ENCODE measurements at regions of chr2 and their contacts with region 1.

Region 1: DNA sequence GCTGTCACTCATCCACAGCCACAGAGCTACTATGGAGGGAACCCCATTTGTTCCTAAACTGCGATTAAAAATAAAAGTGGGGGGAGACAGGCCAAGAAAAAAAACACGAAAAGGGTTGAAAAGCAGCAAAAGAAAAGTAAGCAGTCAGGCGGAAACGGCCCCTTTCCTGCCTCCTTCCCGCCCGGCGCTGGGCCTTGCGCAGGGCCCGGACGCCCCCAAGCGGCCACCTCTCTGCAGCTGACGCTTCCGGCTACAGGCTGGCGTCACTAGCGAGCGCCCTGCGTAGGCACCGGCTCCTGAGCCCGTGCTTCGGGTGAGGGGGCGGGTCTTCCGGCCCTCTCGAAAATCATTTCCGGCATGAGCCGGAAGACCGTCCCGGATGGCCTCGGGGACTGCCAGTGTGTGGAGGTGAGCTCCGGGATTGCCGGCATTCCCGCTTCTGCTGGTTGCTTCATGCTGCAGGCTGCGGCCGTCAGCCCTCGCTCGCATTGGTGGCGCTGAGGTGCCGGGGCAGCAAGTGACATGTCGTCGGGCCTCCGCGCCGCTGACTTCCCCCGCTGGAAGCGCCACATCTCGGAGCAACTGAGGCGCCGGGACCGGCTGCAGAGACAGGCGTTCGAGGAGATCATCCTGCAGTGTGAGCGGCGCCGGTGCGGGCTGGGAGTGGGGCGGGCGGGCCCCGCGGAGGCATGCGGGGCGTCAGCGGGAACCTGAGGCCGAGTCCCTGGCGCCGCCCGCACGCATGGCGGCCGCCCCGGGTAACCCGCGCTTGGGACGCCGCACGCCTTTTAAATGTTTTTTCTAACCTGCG is at the start of gene ATG16L1:
- DNase-seq: peak; percentile 99
- total RNA-seq, gene ATG16L1: 17.5 TPM

Region 2: DNA sequence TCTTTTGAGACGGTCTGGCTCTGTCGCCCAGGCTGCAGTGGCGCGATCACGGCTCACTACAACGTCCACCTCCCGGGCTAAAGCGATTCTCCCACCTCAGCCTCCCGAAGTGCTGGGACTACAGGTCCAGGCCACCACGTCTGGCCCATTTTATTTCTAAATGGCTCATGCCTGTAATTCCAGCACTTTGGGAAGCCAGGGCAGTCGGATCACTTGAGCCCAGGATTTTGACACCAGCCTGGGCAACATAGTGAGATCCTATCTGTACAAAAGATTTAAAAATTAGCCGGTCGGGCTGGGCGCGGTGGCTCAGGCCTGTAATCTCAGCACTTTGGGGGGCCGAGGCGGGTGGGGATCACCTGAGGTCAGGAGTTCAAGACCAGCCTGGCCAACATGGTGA is 644.5 kb before region 1 on chr2:
- intact Hi-C with region 1: loop called (anchors 2 kb)
- DNase-seq: no peak

Region 3: DNA sequence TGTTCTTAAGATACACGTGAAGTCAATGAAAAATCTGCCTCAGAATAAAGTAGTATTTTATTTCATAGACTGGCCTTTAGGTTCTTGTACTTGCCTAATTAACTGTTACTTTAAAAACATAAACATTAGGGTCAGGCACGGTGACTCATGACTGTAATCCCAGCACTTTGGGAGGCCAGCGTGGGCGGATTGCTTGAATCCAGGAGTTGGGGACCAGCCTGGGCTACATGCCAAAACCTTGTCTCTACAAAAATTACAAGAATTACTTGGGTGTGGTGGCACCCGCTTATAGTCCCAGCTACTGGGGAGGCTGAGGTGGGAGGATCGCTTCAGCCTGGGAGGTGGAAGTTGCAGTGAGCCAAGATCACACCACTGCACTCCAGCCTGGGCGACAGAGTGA is 397.4 kb before region 1 on chr2:
- intact Hi-C with region 1: loop called (anchors 5 kb)
- DNase-seq: no peak

Region 4: DNA sequence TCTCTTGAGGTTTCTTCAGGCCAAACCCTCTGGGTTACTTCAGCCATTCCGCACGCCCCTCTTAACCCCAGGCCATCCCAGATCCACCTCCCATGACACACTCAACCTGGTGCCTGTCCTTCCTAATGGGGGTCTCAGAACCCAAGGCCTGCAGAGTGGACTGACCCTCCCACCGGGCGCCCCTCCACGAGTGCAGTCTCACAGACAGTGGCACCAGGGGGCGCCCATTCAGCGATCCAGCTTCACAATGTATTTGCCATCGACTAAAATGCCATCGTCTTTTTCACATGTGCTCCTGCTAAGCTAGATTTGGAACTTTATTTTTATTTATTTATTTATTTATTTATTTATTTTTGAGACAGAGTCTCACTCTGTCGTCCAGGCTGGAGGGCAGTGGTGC is 152.9 kb before region 1 on chr2:
- intact Hi-C with region 1: loop called (anchors 2 kb)
- DNase-seq: no peak

Measured in cardiac septum (tissue), 1 donor.